MCF 10A (cell line): ENCODE measurements at regions of chr19 and their contacts with region 1.

Region 1: DNA sequence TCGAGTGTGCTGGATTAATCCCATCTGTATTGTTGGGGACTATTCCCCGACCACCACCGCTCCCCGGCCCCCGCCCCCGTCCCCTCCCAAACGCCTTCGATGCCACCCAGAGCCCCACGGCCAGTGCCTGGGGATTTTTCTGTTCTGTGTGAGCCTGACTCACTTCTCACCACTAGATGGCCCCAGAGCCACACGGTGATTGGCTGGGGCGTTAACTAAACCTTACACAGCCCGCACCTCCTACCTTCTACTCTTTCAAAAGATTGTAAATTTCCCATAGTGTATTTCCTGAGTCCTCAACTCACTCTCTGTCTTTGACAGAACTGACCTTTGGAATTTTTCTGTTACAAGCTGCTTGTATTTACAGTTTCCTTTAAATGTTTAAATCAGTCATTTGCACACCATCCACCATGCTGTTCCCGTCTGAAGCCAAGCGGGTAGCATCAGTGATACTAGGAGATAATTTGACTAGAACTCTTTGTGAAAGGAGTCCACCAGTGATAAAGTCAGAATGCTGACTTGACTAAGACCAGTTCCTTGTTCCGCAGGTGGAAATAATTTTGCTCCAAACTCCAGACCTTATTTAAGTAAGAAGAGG is 61.4 kb downstream of the RFX2 start:
- DNase-seq: peak; percentile 89
- H3K4me3 Mint-ChIP-seq: no peak overlapping the region
- H3K27ac Mint-ChIP-seq: no peak overlapping the region
- H3K4me1 Mint-ChIP-seq: peaks cover 7% of the 10 kb centered on the region
- H3K27me3 Mint-ChIP-seq: no peaks in the 10 kb centered on the region
- CTCF ChIP-seq: peak; percentile 89

Region 2: DNA sequence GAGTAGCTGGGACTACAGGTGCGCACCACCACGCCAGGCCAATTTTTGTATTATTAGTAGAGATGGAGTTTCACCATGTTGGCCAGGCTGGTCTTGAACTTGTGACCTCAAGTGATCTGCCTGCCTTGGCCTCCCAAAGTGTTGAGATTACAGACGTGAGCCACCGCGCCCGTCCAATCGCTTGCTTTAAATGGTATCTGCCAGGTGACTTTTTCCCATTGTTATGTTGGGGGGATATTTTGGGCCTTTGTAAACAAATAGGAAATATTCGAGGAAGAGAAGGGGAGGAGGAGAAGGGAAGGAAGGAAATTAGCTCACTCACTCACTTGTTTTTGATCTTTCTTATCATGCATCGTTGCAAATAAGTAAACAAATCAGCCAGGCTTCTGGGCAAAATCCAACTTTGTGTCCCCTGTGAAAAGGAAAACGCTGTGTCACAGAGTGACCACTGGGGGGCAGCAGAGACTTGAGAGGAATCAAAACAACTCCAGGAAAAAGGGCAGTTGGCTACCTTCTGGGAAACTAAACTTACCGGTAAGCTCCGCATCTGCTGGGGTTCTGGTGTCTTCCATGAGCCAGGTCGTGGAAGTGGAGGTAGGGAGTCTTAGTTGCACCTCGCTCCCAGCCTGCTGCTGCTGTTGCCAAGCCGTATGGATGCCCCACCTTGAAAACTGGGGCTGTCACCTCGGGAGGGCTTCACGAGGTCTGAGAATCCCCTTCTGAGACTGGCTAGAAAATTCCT is 61.7 kb before region 1 on chr19:
- CTCF ChIA-PET with region 1: interaction called, 8 read pairs
- POLR2A ChIA-PET with region 1: no interaction called
- intact Hi-C with region 1: loop called (anchors 1 kb)
- DNase-seq: peak; percentile 84
- H3K4me3 Mint-ChIP-seq: peak overlapping the region; percentile 47
- H3K27ac Mint-ChIP-seq: no peak overlapping the region
- H3K4me1 Mint-ChIP-seq: peaks cover 14% of the 10 kb centered on the region
- H3K27me3 Mint-ChIP-seq: no peaks in the 10 kb centered on the region
- CTCF ChIP-seq: peak; percentile 89

Region 3: GRCh38 chr19:6021878-6022569 is 26.9 kb before region 1 on chr19:
- CTCF ChIA-PET with region 1: no interaction called
- POLR2A ChIA-PET with region 1: no interaction called
- intact Hi-C with region 1: no loop called
- DNase-seq: peak; percentile 74
- H3K4me3 Mint-ChIP-seq: no peak overlapping the region
- H3K27ac Mint-ChIP-seq: peak overlapping the region; percentile 24
- H3K4me1 Mint-ChIP-seq: no peaks in the 10 kb centered on the region
- H3K27me3 Mint-ChIP-seq: no peaks in the 10 kb centered on the region
- CTCF ChIP-seq: peak; percentile 49

Region 4: DNA sequence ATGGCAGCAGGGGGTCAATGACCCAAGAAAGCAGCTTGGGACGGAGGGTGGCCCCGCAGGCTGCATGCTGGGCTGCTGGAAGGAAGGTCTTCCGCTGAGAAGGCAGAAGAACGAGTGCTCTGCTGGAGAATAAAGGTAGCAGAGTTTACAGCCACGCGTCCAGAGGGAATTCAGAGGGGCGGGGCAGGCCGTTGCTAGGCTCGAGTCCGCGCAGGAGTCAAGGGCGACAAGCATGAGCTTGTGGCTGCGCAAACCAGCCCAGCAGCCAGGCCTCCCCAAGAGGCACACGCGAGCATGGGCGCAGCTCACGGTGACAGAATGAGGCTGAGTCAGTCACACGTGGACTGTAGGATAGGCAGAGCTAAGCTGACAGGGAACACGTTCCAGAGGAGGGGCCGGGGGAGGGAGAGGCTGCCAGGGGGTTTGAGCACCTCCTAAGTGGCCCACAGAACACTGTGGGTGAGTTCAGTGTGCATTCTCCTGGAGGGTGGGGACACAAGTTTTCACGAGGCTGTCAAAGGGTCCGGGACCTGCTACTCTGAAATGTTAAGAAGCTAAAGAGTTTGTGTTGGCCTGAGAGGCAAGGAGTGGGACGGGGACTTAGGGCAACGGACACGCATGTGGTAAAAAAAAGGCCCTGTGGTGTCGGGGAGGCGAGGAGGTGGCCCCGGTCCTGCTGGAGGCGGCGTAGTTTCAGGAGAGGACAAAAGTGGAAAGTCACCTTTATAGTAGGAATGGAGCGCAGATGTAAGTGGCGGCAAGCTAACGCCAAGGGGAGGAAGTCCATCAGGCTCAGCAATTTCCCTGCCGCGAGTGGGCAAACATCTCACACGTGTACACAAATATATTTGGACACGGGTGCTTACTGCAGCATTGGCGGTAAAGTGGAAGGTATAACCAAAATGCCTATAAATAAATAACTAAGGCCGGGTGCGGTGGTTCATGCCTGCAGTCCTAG is 43.7 kb after region 1 on chr19:
- CTCF ChIA-PET with region 1: interaction called, 5 read pairs
- POLR2A ChIA-PET with region 1: interaction called, 13 read pairs
- intact Hi-C with region 1: no loop called
- DNase-seq: peak; percentile 88
- H3K4me3 Mint-ChIP-seq: peak overlapping the region; percentile 66
- H3K27ac Mint-ChIP-seq: peak overlapping the region; percentile 97
- H3K4me1 Mint-ChIP-seq: peaks cover 32% of the 10 kb centered on the region
- H3K27me3 Mint-ChIP-seq: no peaks in the 10 kb centered on the region
- CTCF ChIP-seq: no peak

Region 5: GRCh38 chr19:6103217-6103644 is 54.3 kb after region 1 on chr19:
- CTCF ChIA-PET with region 1: interaction called, 10 read pairs
- POLR2A ChIA-PET with region 1: interaction called, 125 read pairs
- intact Hi-C with region 1: no loop called
- DNase-seq: peak; percentile 98
- H3K4me3 Mint-ChIP-seq: peak overlapping the region; percentile 24
- H3K27ac Mint-ChIP-seq: peak overlapping the region; percentile 97
- H3K4me1 Mint-ChIP-seq: peaks cover 60% of the 10 kb centered on the region
- H3K27me3 Mint-ChIP-seq: no peaks in the 10 kb centered on the region
- CTCF ChIP-seq: no peak

Region 6: GRCh38 chr19:6116749-6117430 is 68.0 kb after region 1 on chr19:
- CTCF ChIA-PET with region 1: interaction called, 114 read pairs
- POLR2A ChIA-PET with region 1: interaction called, 4 read pairs
- intact Hi-C with region 1: no loop called
- DNase-seq: no peak
- H3K4me3 Mint-ChIP-seq: no peak overlapping the region
- H3K27ac Mint-ChIP-seq: no peak overlapping the region
- H3K4me1 Mint-ChIP-seq: peaks cover 6% of the 10 kb centered on the region
- H3K27me3 Mint-ChIP-seq: no peaks in the 10 kb centered on the region
- CTCF ChIP-seq: no peak

Region 7: GRCh38 chr19:6297202-6297601 is 248.3 kb after region 1 on chr19:
- CTCF ChIA-PET with region 1: interaction called, 3 read pairs
- POLR2A ChIA-PET with region 1: no interaction called
- intact Hi-C with region 1: loop called (anchors 2 kb)
- DNase-seq: no peak
- H3K4me3 Mint-ChIP-seq: no peak overlapping the region
- H3K27ac Mint-ChIP-seq: no peak overlapping the region
- H3K4me1 Mint-ChIP-seq: no peaks in the 10 kb centered on the region
- H3K27me3 Mint-ChIP-seq: no peaks in the 10 kb centered on the region
- CTCF ChIP-seq: no peak